ENCODE measurements at regions of chr2 and their contacts with region 1.

Region 1: GRCh38 chr2:201182650-201183364 is at the start of gene CASP10:
- DNase-seq: peak; percentile 60
- ATAC-seq: peak; percentile 79
- H3K4me3 Mint-ChIP-seq: peak within 1 kb of the TSS; percentile 97
- H3K27ac Mint-ChIP-seq: peak within 1 kb of the TSS; percentile 93
- H3K4me1 Mint-ChIP-seq: peaks cover 46% of the 10 kb centered on the region
- H3K27me3 Mint-ChIP-seq: no peaks in the 10 kb centered on the region
- total RNA-seq, gene CASP10: 40.7 to 42.8 TPM

Region 2: GRCh38 chr2:200913654-200914053 is 269.2 kb before region 1 on chr2:
- CTCF ChIA-PET with region 1: interaction called, 10 read pairs
- POLR2A ChIA-PET with region 1: no interaction called
- DNase-seq: no peak
- ATAC-seq: no peak
- H3K4me3 Mint-ChIP-seq: no peak overlapping the region
- H3K27ac Mint-ChIP-seq: no peak overlapping the region
- H3K4me1 Mint-ChIP-seq: no peaks in the 10 kb centered on the region
- H3K27me3 Mint-ChIP-seq: no peaks in the 10 kb centered on the region

Region 3: GRCh38 chr2:201118121-201118960 is 64.5 kb before region 1 on chr2:
- CTCF ChIA-PET with region 1: interaction called, 16 read pairs
- POLR2A ChIA-PET with region 1: interaction called, 32 read pairs
- DNase-seq: peak; percentile 93
- ATAC-seq: peak; percentile 45
- H3K4me3 Mint-ChIP-seq: peak overlapping the region; percentile 97
- H3K27ac Mint-ChIP-seq: peak overlapping the region; percentile 99
- H3K4me1 Mint-ChIP-seq: peaks cover 56% of the 10 kb centered on the region
- H3K27me3 Mint-ChIP-seq: no peaks in the 10 kb centered on the region

Region 4: DNA sequence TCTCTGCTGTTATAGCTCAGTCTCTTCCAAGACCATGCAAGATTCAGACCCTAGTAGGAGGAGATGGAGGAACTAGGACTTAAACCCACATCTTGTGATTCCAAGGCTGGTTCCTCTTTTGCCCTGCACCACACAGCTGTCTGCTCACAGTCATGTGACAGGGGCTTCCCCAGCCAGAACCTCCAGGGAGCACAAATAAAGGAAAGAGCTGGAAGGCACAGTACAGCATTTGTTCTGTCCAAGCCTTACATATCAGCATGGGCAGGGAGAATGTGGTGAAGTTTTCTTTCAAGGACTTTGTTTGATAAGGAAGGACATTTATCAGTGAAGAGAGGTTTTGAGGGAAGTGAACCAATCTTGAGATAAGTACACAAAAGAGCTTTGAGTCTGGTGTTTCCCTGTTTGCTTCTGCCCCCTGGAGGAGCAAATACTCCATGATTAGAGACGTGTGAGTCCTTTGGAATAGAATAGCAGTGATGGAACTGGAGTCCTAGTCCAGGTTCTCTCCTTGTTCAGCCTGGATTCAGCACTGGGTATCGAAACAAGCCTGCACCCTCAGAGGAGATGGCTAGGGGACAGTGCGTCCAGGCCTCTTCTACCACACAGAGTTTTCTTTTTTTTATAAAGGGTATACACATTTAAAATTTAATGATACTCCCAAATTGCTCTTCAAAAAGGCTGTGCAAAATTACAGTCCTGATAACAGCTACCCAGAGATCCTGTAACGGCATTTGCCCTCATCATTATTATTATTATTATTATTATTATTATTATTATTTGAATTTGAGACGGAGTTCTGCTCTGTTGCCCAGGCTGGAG is 24.5 kb before region 1 on chr2:
- CTCF ChIA-PET with region 1: interaction called, 15 read pairs
- POLR2A ChIA-PET with region 1: interaction called, 3 read pairs
- DNase-seq: peak; percentile 80
- ATAC-seq: peak; percentile 90
- H3K4me3 Mint-ChIP-seq: no peak overlapping the region
- H3K27ac Mint-ChIP-seq: peak overlapping the region; percentile 76
- H3K4me1 Mint-ChIP-seq: peaks cover 11% of the 10 kb centered on the region
- H3K27me3 Mint-ChIP-seq: no peaks in the 10 kb centered on the region

Region 5: GRCh38 chr2:201208563-201209252 is 25.9 kb after region 1 on chr2:
- CTCF ChIA-PET with region 1: interaction called, 10 read pairs
- POLR2A ChIA-PET with region 1: no interaction called
- DNase-seq: no peak
- ATAC-seq: no peak
- H3K4me3 Mint-ChIP-seq: no peak overlapping the region
- H3K27ac Mint-ChIP-seq: no peak overlapping the region
- H3K4me1 Mint-ChIP-seq: peaks cover 28% of the 10 kb centered on the region
- H3K27me3 Mint-ChIP-seq: no peaks in the 10 kb centered on the region

Region 6: DNA sequence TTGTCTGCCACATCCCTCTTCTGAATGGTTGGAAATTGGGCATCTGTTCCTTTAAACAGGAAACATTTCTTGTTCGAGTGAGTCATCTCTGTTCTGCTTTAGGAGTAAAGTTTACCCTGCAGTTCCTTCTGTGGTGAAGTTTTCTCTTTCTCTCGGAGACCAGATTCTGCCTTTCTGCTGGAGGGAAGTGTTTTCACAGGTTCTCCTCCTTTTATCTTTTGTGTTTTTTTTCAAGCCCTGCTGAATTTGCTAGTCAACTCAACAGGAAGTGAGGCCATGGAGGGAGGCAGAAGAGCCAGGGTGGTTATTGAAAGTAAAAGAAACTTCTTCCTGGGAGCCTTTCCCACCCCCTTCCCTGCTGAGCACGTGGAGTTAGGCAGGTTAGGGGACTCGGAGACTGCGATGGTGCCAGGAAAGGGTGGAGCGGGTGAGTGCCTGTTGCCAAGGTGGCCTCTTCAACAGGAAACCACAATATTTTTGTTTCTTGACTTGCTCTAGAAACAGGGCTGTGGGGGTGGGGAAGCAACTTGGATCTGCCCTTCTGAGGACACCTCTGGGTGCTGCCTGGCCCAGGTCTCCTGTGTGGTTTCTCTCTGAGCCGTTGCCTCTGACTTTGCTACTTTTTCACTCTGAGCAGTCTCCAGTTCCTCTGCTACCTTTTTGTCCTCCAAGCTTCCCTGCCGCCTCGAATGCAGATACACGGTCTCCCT is 75.3 kb after region 1 on chr2:
- CTCF ChIA-PET with region 1: interaction called, 11 read pairs
- POLR2A ChIA-PET with region 1: interaction called, 10 read pairs
- DNase-seq: peak; percentile 98
- ATAC-seq: peak; percentile 71
- H3K4me3 Mint-ChIP-seq: peak overlapping the region; percentile 81
- H3K27ac Mint-ChIP-seq: peak overlapping the region; percentile 94
- H3K4me1 Mint-ChIP-seq: peaks cover 74% of the 10 kb centered on the region
- H3K27me3 Mint-ChIP-seq: no peaks in the 10 kb centered on the region

Measured in activated CD8-positive, alpha-beta T cell treated with anti-CD3 and anti-CD28 coated beads, Interleukin-2, amount 10 ng/mL, durations not matched to agents 7 days and 5 days (primary cell).